ENCODE measurements at regions of chr20 and their contacts with region 1.

Region 1: GRCh38 chr20:46022411-46023147 is 6.4 kb upstream of the SLC12A5 start:
- DNase-seq: peak in 2 of 3 donors; percentile 43 to 54
- H3K4me3 ChIP-seq: peak overlapping the region in 1 of 3 experiments; percentile 32
- H3K4me3 Mint-ChIP-seq: peak overlapping the region in 1 of 2 donors; percentile 63
- H3K27ac ChIP-seq: no peak overlapping the region
- H3K27ac Mint-ChIP-seq: no peak overlapping the region
- H3K4me1 ChIP-seq: peaks cover 14 to 27% of the 10 kb centered on the region in 2 donors
- H3K4me1 Mint-ChIP-seq: peaks cover 18% of the 10 kb centered on the region
- H3K27me3 ChIP-seq: peaks cover 23 to 54% of the 10 kb centered on the region in 2 donors
- H3K27me3 Mint-ChIP-seq: peaks cover 39 to 79% (median 48%) of the 10 kb centered on the region in 3 donors
- CTCF ChIP-seq: peak; percentile 77

Region 2: GRCh38 chr20:46111028-46111835 is 88.7 kb after region 1 on chr20:
- intact Hi-C with region 1: loop called in 1 of 2 experiments (anchors 5 kb)
- DNase-seq: peak; percentile 91 to 97 (median 91)
- H3K4me3 ChIP-seq: peak overlapping the region in 1 of 3 experiments; percentile 22
- H3K4me3 Mint-ChIP-seq: peak overlapping the region in 1 of 2 donors; percentile 81
- H3K27ac ChIP-seq: peak overlapping the region in 1 of 2 donors; percentile 44
- H3K27ac Mint-ChIP-seq: peak overlapping the region; percentile 77 to 94 (median 87)
- H3K4me1 ChIP-seq: peaks cover 30 to 36% of the 10 kb centered on the region in 2 donors
- H3K4me1 Mint-ChIP-seq: peaks cover 35% of the 10 kb centered on the region
- H3K27me3 ChIP-seq: peaks cover 6 to 12% of the 10 kb centered on the region in 2 donors
- H3K27me3 Mint-ChIP-seq: peaks cover 16 to 30% (median 16%) of the 10 kb centered on the region in 3 donors
- CTCF ChIP-seq: no peak

Region 3: DNA sequence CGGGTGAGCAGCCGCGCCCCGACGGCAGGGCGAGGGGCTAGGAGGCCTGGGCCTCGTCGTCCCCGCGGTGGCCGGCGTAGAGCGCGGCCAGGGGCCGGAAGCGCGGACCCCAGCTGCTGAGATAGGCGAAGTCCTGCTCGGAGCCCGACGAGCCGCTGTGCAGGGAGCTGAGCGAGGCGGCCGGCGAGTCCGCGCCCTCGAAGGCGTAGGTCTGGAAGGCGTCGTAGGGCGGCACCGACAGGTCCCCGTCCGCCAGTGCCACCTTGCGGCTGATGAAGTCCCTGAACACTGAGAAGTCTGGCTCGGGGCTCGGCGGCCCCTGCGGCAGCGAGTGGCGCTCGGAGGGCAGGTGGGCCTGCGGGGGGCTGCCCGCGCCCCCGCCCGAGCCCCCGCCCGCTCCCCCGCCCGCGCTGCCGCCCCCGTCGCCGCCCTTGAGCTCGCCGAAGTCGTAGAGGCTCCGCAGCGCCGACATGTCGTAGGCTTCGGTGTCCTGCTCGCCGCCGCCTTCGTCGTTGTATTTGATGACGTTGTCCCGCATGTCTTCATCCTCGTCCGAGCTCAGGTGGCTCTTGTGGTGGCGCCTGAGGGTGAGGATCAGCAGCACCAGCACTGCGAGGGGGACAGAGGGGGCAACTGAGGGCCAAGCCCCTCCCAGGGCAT is 152.0 kb after region 1 on chr20:
- intact Hi-C with region 1: loop called (anchors 10 kb)
- DNase-seq: peak; percentile 63 to 74 (median 72)
- H3K4me3 ChIP-seq: no peak overlapping the region
- H3K4me3 Mint-ChIP-seq: peak overlapping the region; percentile 50 to 74
- H3K27ac ChIP-seq: no peak overlapping the region
- H3K27ac Mint-ChIP-seq: no peak overlapping the region
- H3K4me1 ChIP-seq: no peaks in the 10 kb centered on the region
- H3K4me1 Mint-ChIP-seq: peaks cover 7% of the 10 kb centered on the region
- H3K27me3 ChIP-seq: peaks cover 28 to 45% of the 10 kb centered on the region in 2 donors
- H3K27me3 Mint-ChIP-seq: peaks cover 44 to 73% (median 68%) of the 10 kb centered on the region in 3 donors
- CTCF ChIP-seq: peak; percentile 85